Endothelial cell of umbilical vein (primary cell): ENCODE measurements at regions of chr1 and their contacts with region 1.

Region 1: GRCh38 chr1:215517441-215517891 is 49.6 kb upstream of the KCTD3 start:
- DNase-seq: peak; percentile 28
- H3K4me3 ChIP-seq: no peak overlapping the region
- H3K27ac ChIP-seq: no peak overlapping the region
- H3K4me1 ChIP-seq: no peaks in the 10 kb centered on the region
- H3K27me3 ChIP-seq: no peaks in the 10 kb centered on the region
- CTCF ChIP-seq: peak in 1 of 2 donors; percentile 6
- POLR2A ChIP-seq: no peak

Region 2: GRCh38 chr1:214808845-214809460 is 708.5 kb before region 1 on chr1:
- CTCF ChIA-PET with region 1: interaction called, 10 read pairs
- POLR2A ChIA-PET with region 1: no interaction called
- dilution Hi-C with region 1: no loop called
- intact Hi-C with region 1: no loop called
- DNase-seq: peak; percentile 25
- H3K4me3 ChIP-seq: no peak overlapping the region
- H3K27ac ChIP-seq: no peak overlapping the region
- H3K4me1 ChIP-seq: no peaks in the 10 kb centered on the region
- H3K27me3 ChIP-seq: no peaks in the 10 kb centered on the region
- CTCF ChIP-seq: peak; percentile 8 to 14
- POLR2A ChIP-seq: no peak

Region 3: GRCh38 chr1:215181518-215181917 is 335.9 kb before region 1 on chr1:
- CTCF ChIA-PET with region 1: interaction called, 12 read pairs
- POLR2A ChIA-PET with region 1: no interaction called
- dilution Hi-C with region 1: no loop called
- intact Hi-C with region 1: no loop called
- DNase-seq: peak; percentile 14
- H3K4me3 ChIP-seq: no peak overlapping the region
- H3K27ac ChIP-seq: no peak overlapping the region
- H3K4me1 ChIP-seq: no peaks in the 10 kb centered on the region
- H3K27me3 ChIP-seq: peaks cover 0 to 3% of the 10 kb centered on the region in 2 experiments
- CTCF ChIP-seq: peak; percentile 10 to 27
- POLR2A ChIP-seq: no peak

Region 4: GRCh38 chr1:215380557-215380956 is 136.9 kb before region 1 on chr1:
- CTCF ChIA-PET with region 1: no interaction called
- POLR2A ChIA-PET with region 1: no interaction called
- dilution Hi-C with region 1: no loop called
- intact Hi-C with region 1: no loop called
- DNase-seq: no peak
- H3K4me3 ChIP-seq: no peak overlapping the region
- H3K27ac ChIP-seq: no peak overlapping the region
- H3K4me1 ChIP-seq: no peaks in the 10 kb centered on the region
- H3K27me3 ChIP-seq: no peaks in the 10 kb centered on the region
- CTCF ChIP-seq: no peak
- POLR2A ChIP-seq: no peak

Region 5: DNA sequence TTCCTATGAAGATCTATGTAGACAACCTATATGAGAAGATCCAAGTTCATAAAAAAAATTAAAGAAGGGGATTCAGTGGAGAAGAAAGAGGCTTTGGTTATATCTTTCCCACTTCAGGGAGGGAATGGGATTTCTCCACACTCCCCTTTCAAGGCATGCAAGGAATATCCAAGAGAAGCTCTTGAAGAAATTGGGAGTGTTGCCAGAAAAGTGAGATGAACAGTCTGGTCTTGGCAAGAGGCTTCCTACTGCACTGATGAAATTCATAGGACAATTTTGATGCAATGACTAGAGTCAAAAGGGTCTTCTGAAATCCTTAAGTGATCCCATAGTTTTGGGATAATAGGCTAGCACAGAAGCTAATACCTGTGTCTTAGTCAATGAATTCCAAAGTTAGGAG is 202.7 kb after region 1 on chr1:
- CTCF ChIA-PET with region 1: no interaction called
- POLR2A ChIA-PET with region 1: no interaction called
- dilution Hi-C with region 1: no loop called
- intact Hi-C with region 1: no loop called
- DNase-seq: no peak
- H3K4me3 ChIP-seq: no peak overlapping the region
- H3K27ac ChIP-seq: no peak overlapping the region
- H3K4me1 ChIP-seq: no peaks in the 10 kb centered on the region
- H3K27me3 ChIP-seq: no peaks in the 10 kb centered on the region
- CTCF ChIP-seq: no peak
- POLR2A ChIP-seq: no peak